ENCODE measurements at regions of chr2 and their contacts with region 1.

Region 1: DNA sequence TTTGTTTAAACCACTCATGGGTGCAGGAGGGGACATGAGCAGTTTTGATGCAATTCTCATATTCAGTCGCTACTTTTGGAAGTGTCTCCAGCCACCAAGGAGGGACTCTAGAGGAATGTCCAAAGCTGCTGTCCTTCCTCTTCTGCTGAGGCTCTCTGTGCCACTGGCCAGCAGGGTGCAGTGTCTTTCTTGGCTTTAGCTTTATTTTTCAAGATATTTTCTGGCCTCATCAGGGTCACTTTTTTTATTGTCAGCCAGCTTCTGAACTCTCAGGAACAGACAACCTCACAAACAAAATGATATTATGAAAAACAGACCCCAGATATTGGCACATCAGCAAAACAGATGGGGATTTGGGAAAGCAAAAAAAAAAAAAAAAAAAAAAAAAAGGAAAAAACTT is 289.3 kb upstream of the ZSWIM2 start:
- DNase-seq: peak; percentile 34 to 46
- H3K4me3 ChIP-seq: no peak overlapping the region
- H3K4me3 Mint-ChIP-seq: no peak overlapping the region
- H3K27ac Mint-ChIP-seq: no peak overlapping the region
- H3K4me1 ChIP-seq: peaks cover 11% of the 10 kb centered on the region; the same call in 1 of the 2 replicates
- H3K4me1 Mint-ChIP-seq: peaks cover 11% of the 10 kb centered on the region
- H3K27me3 ChIP-seq: no peaks in the 10 kb centered on the region
- H3K27me3 Mint-ChIP-seq: no peaks in the 10 kb centered on the region
- CTCF ChIP-seq: peak; percentile 59 to 81

Region 2: GRCh38 chr2:186903216-186903615 is 235.0 kb before region 1 on chr2:
- CTCF ChIA-PET with region 1: no interaction called
- POLR2A ChIA-PET with region 1: no interaction called
- intact Hi-C with region 1: loop called (anchors 1 kb)
- DNase-seq: no peak
- H3K4me3 ChIP-seq: no peak overlapping the region
- H3K4me3 Mint-ChIP-seq: no peak overlapping the region
- H3K27ac Mint-ChIP-seq: no peak overlapping the region
- H3K4me1 ChIP-seq: no peaks in the 10 kb centered on the region
- H3K4me1 Mint-ChIP-seq: no peaks in the 10 kb centered on the region
- H3K27me3 ChIP-seq: no peaks in the 10 kb centered on the region
- H3K27me3 Mint-ChIP-seq: peaks cover 8% of the 10 kb centered on the region
- CTCF ChIP-seq: peak; percentile 20 to 31

Region 3: DNA sequence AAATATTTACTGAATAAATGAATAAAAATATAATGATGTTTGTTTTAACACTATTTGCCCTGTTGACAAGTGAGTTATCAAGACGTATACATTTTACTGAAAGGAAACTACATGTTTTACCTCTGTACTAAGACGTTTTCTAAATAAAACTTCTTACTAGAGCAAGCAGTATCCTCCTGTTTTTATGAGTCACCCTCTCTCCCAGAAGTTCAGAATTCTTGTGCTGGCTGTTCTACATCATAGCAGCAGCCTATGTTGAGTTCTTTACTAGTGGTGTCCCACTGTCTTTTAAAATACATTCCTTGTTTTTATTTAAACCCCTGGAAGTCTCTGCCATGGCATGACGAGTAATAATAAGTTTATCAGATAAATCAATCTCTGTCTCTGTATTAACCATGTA is 12.4 kb after region 1 on chr2:
- CTCF ChIA-PET with region 1: interaction called, 10 read pairs
- POLR2A ChIA-PET with region 1: no interaction called
- intact Hi-C with region 1: no loop called
- DNase-seq: no peak
- H3K4me3 ChIP-seq: no peak overlapping the region
- H3K4me3 Mint-ChIP-seq: no peak overlapping the region
- H3K27ac Mint-ChIP-seq: no peak overlapping the region
- H3K4me1 ChIP-seq: no peaks in the 10 kb centered on the region
- H3K4me1 Mint-ChIP-seq: no peaks in the 10 kb centered on the region
- H3K27me3 ChIP-seq: no peaks in the 10 kb centered on the region
- H3K27me3 Mint-ChIP-seq: no peaks in the 10 kb centered on the region
- CTCF ChIP-seq: no peak

Region 4: DNA sequence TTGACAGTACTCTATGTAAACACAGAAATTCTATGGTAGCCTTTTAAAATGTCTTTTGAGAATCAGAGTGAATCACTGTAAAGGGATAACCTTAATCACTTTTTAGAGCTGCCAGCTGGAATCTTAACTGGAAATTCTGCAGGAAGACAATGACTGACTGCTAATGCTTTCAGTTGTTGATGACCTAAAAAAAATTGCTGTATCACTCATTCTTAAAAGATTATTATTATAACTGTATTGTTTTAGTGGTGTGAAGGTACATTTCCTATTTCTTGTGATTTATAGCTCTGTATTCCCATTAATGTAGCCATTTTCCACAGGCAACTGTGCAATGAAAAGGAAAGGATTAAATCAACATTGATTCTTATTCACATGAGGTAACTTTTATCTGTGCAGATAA is 49.3 kb after region 1 on chr2:
- CTCF ChIA-PET with region 1: no interaction called
- POLR2A ChIA-PET with region 1: no interaction called
- intact Hi-C with region 1: no loop called
- DNase-seq: no peak
- H3K4me3 ChIP-seq: no peak overlapping the region
- H3K4me3 Mint-ChIP-seq: no peak overlapping the region
- H3K27ac Mint-ChIP-seq: no peak overlapping the region
- H3K4me1 ChIP-seq: peaks cover 15% of the 10 kb centered on the region
- H3K4me1 Mint-ChIP-seq: peaks cover 12% of the 10 kb centered on the region
- H3K27me3 ChIP-seq: no peaks in the 10 kb centered on the region
- H3K27me3 Mint-ChIP-seq: no peaks in the 10 kb centered on the region
- CTCF ChIP-seq: no peak

Region 5: DNA sequence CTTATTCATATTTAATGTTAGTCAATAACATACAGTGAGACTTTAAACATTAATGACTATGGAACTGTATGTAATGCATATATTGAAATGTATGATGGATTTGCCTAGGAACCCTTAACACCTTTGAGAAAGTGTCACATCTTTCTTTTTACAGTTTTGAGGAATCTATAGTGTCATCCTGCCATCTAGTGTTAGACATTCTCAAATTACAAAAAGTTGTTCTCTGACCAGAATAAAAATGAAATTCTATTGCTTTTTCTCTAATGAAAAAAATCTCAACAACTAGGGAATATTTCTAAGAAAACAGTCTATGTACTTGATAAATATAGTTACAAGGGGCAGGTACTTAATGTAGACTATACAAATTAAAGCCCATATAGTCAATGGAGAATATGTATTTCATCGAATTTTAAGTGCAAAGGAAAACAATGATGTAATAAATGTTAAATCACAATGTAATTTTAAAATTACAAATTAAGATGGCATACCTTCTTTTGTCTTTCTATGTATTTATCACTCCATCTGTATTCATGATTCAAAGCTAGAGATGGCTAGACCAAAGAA is 314.9 kb after region 1 on chr2:
- CTCF ChIA-PET with region 1: interaction called, 5 read pairs
- POLR2A ChIA-PET with region 1: no interaction called
- intact Hi-C with region 1: loop called (anchors 1 kb)
- DNase-seq: peak in 1 of 2 experiments; percentile 13
- H3K4me3 ChIP-seq: no peak overlapping the region
- H3K4me3 Mint-ChIP-seq: no peak overlapping the region
- H3K27ac Mint-ChIP-seq: no peak overlapping the region
- H3K4me1 ChIP-seq: no peaks in the 10 kb centered on the region
- H3K4me1 Mint-ChIP-seq: no peaks in the 10 kb centered on the region
- H3K27me3 ChIP-seq: no peaks in the 10 kb centered on the region; the same call in 1 of the 2 replicates
- H3K27me3 Mint-ChIP-seq: no peaks in the 10 kb centered on the region
- CTCF ChIP-seq: peak; percentile 25 to 39